Activated T-helper 1 cell treated with anti-CD3 and anti-CD28 coated beads, Interleukin-12 subunit alpha, Interleukin-12 subunit beta, Interleukin-2, Interleukin-4 antibody, amounts not matched to agents 30 ng/mL and 10 ng/mL and 1 ng/mL, durations not matched to agents 14 hours and 24 hours and 36 hours (primary cell): ENCODE measurements at regions of chr5 and their contacts with region 1.

Region 1: GRCh38 chr5:83076742-83077661 is at the starts of genes TMEM167A and XRCC4:
- DNase-seq: peak; percentile 93
- H3K4me3 Mint-ChIP-seq: peak within 1 kb of the TSS; percentile 100
- H3K27ac Mint-ChIP-seq: peak within 1 kb of the TSS; percentile 99
- H3K4me1 Mint-ChIP-seq: peaks cover 43% of the 10 kb centered on the region
- H3K27me3 Mint-ChIP-seq: no peaks in the 10 kb centered on the region
- total RNA-seq, gene TMEM167A: 84.6 and 96.2 TPM in 2 replicates
- total RNA-seq, gene XRCC4: 10.2 and 11.2 TPM in 2 replicates

Region 2: DNA sequence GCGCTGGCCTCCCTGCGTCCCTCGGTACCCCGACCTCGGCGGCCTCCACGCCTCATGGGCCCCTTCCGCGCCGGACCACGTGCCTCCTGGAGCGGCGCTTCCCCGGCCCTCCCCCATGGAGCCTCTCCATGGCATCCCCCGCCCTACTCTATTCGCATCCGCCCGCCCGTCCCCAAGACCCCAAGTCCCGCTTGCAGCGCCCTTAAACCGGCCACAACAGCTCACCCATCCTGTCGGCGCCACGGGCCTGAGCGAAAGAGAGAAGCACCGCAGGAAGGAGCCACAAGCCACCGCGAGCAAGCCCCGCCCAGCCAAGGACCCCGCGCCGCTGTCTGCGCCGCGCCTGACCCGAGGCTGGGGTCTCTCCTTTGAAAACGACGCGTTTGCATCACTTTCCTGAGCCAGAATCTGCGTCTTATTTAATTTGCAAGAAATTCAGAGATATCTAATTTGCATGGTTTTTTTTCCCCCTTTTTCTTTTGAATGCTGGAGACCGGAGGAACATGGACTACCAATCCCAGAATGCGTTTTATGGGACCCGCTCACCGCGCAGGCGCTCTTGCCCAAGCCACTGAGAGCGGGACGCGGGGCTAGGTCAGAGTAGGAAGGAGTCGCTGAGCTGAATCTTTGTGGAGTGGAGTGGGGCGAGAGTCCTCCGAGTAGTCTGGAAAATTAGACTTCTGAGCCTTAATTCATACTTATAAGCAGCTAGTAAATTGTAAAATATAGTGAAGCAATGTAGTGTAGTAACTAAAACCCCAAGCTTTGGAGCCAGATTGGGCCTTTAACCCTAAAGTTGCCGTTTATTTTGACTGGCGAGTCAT is 798.7 kb before region 1 on chr5 and contains the start of gene RPS23:
- intact Hi-C with region 1: loop called (anchors 1 kb)
- DNase-seq: peak; percentile 81
- H3K4me3 Mint-ChIP-seq: peak within 1 kb of the TSS; percentile 92
- H3K27ac Mint-ChIP-seq: peak within 1 kb of the TSS; percentile 96
- H3K4me1 Mint-ChIP-seq: peaks cover 34% of the 10 kb centered on the region
- H3K27me3 Mint-ChIP-seq: no peaks in the 10 kb centered on the region
- total RNA-seq, gene RPS23: 2,220 and 2,235 TPM in 2 replicates

Region 3: GRCh38 chr5:83066548-83067110 is 10.4 kb before region 1 on chr5:
- intact Hi-C with region 1: loop called (anchors 1 kb)
- DNase-seq: no peak
- H3K4me3 Mint-ChIP-seq: no peak overlapping the region
- H3K27ac Mint-ChIP-seq: no peak overlapping the region
- H3K4me1 Mint-ChIP-seq: peaks cover 22% of the 10 kb centered on the region
- H3K27me3 Mint-ChIP-seq: no peaks in the 10 kb centered on the region